Breast epithelium (tissue), 4 donors: ENCODE measurements at regions of chr15 and their contacts with region 1.

Region 1: GRCh38 chr15:91853968-91854638 is 595 bp downstream of the SLCO3A1 start:
- DNase-seq: peak in 1 of 2 donors; percentile 41
- H3K4me3 ChIP-seq: peak overlapping the region; percentile 71 to 80 (median 74)
- H3K27ac ChIP-seq: peak overlapping the region; percentile 87 to 93
- H3K4me1 ChIP-seq: peaks cover 3 to 11% of the 10 kb centered on the region in 2 donors
- H3K27me3 ChIP-seq: no peaks in the 10 kb centered on the region
- CTCF ChIP-seq: peak in 1 of 3 donors; percentile 23
- POLR2A ChIP-seq: no peak

Region 2: DNA sequence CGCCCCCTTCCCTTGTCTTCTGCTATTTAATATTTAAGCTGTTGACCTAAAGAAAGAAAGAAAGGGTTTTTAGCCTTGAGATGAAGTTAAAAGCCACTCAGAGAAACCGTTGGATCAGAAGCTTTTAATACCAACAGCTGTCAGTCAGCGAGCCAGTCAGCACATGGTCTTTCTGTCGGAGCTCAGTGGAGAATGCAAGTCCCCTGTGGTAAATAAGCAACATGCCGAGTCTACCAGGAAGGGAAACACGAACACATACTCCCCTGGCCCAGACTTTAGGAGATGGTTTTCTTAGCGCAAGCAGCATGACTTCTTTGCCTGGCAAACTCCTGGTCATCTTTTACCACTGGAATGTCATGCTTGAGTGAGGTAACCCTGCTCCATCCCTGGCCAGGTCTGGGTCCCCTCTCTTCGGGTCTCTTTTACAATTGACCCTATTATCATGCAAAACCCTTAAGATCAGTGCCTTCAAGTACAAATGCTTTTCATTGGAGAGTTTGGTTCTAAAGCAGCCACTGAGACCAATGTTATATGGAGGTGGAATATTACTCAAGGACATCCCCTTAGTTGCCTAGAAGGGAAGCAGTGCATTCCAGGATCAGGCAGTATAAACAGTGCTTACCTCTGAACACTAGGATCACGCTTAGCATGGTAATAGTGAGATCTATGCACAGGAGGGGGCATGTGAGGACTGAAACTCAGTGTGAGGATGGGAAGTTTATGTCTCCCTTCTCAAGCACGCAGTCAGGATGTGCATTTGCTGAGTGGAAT is 27.6 kb after region 1 on chr15:
- intact Hi-C with region 1: loop called (anchors 1 kb)
- DNase-seq: no peak
- H3K4me3 ChIP-seq: no peak overlapping the region
- H3K27ac ChIP-seq: no peak overlapping the region
- H3K4me1 ChIP-seq: no peaks in the 10 kb centered on the region
- H3K27me3 ChIP-seq: no peaks in the 10 kb centered on the region
- CTCF ChIP-seq: no peak
- POLR2A ChIP-seq: no peak